HCT116 (cell line): ENCODE measurements at regions of chr22 and their contacts with region 1.

Region 1: GRCh38 chr22:27022274-27022895 is 365.0 kb downstream of the MIAT start:
- DNase-seq: no peak
- ATAC-seq: no peak
- H3K4me3 ChIP-seq: no peak overlapping the region
- H3K27ac ChIP-seq: no peak overlapping the region
- H3K4me1 ChIP-seq: no peaks in the 10 kb centered on the region
- H3K27me3 ChIP-seq: peaks cover 79% of the 10 kb centered on the region
- CTCF ChIP-seq: no peak
- POLR2A ChIP-seq: no peak
- RAD21 ChIP-seq: no peak

Region 2: GRCh38 chr22:26804911-26805539 is 217.4 kb before region 1 on chr22:
- CTCF ChIA-PET with region 1: no interaction called
- POLR2A ChIA-PET with region 1: no interaction called
- RAD21 ChIA-PET with region 1: no interaction called
- intact Hi-C with region 1: no loop called
- DNase-seq: no peak
- ATAC-seq: no peak
- H3K4me3 ChIP-seq: no peak overlapping the region
- H3K27ac ChIP-seq: no peak overlapping the region
- H3K4me1 ChIP-seq: 0 out of 4 replicates have a peak, but pooled peaks cover 0 to 4% of the 10 kb centered on the region in 2 experiments
- H3K27me3 ChIP-seq: peaks cover 53% of the 10 kb centered on the region
- CTCF ChIP-seq: no peak
- POLR2A ChIP-seq: no peak
- RAD21 ChIP-seq: no peak

Region 3: GRCh38 chr22:26898946-26899605 is 123.3 kb before region 1 on chr22:
- CTCF ChIA-PET with region 1: no interaction called
- POLR2A ChIA-PET with region 1: no interaction called
- RAD21 ChIA-PET with region 1: no interaction called
- intact Hi-C with region 1: loop called (anchors 2 kb)
- DNase-seq: no peak
- ATAC-seq: no peak
- H3K4me3 ChIP-seq: no peak overlapping the region
- H3K27ac ChIP-seq: no peak overlapping the region
- H3K4me1 ChIP-seq: peaks cover 2 to 8% of the 10 kb centered on the region in 2 experiments
- H3K27me3 ChIP-seq: peaks cover 64% of the 10 kb centered on the region
- CTCF ChIP-seq: no peak
- POLR2A ChIP-seq: no peak
- RAD21 ChIP-seq: no peak

Region 4: GRCh38 chr22:26927821-26928220 is 94.6 kb before region 1 on chr22:
- CTCF ChIA-PET with region 1: no interaction called
- POLR2A ChIA-PET with region 1: no interaction called
- RAD21 ChIA-PET with region 1: no interaction called
- intact Hi-C with region 1: no loop called
- DNase-seq: no peak
- ATAC-seq: no peak
- H3K4me3 ChIP-seq: no peak overlapping the region
- H3K27ac ChIP-seq: no peak overlapping the region
- H3K4me1 ChIP-seq: no peaks in the 10 kb centered on the region
- H3K27me3 ChIP-seq: peaks cover 54% of the 10 kb centered on the region
- CTCF ChIP-seq: no peak
- POLR2A ChIP-seq: no peak
- RAD21 ChIP-seq: no peak